ENCODE measurements at regions of chr1 and their contacts with region 1.

Region 1: GRCh38 chr1:12619792-12620487 is 1.9 kb upstream of the DHRS3 start:
- DNase-seq: peak; percentile 56 to 88 (median 74)
- ATAC-seq: peak; percentile 43
- H3K4me3 ChIP-seq: peak overlapping the region; percentile 79
- H3K4me3 Mint-ChIP-seq: peak overlapping the region; percentile 99
- H3K27ac ChIP-seq: no peak overlapping the region
- H3K27ac Mint-ChIP-seq: peak overlapping the region; percentile 88
- H3K4me1 ChIP-seq: peaks cover 54% of the 10 kb centered on the region
- H3K4me1 Mint-ChIP-seq: peaks cover 43% of the 10 kb centered on the region
- H3K27me3 ChIP-seq: no peaks in the 10 kb centered on the region
- H3K27me3 Mint-ChIP-seq: no peaks in the 10 kb centered on the region
- CTCF ChIP-seq: peak; percentile 98

Region 2: DNA sequence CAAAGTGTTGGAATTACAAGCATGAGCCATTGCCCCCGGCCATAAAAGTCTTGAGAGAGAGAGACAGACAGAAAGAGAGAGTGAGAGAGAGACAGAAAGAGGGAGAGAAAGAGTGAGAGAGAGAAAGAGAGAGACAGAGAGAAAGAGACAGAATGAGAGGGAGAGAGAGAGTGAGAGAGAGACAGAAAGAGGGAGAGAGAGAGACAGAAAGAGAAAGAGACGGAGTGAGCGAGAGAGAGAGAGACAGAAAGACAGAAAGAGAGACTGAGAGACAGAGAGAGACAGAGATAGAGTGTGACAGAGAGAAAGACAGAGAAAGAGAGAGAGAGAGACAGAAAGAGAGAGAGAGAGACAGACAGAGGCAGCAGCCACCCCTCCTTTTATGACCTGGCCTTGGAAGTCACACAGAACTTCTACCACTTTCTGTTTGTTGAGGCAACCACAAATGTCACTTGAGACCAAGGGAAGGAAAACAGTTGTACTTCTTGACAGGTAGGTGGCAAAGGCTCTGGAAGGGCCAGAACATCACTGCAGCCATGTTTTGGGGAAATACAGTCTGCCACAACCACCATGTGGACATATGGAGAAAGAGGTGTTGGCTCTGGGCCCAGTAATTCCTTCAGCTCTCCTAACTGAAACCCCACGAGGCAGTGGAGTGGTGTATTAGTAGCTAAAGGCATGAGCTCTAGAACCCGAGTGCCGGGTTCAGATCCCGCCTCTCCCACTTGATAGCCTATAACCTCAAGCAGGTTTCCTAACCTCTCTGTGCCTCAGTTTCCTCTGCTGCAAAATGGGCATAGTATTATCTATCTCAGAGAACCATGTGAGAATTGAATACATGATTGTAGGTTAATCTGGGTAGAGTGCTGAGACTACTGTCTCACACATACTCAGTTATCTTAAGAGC is 506.3 kb before region 1 on chr1:
- CTCF ChIA-PET with region 1: no interaction called
- POLR2A ChIA-PET with region 1: no interaction called
- intact Hi-C with region 1: loop called in 1 of 2 experiments (anchors 5 kb)
- DNase-seq: no peak
- ATAC-seq: no peak
- H3K4me3 ChIP-seq: no peak overlapping the region
- H3K4me3 Mint-ChIP-seq: no peak overlapping the region
- H3K27ac ChIP-seq: no peak overlapping the region
- H3K27ac Mint-ChIP-seq: no peak overlapping the region
- H3K4me1 ChIP-seq: peaks cover 8% of the 10 kb centered on the region
- H3K4me1 Mint-ChIP-seq: no peaks in the 10 kb centered on the region
- H3K27me3 ChIP-seq: no peaks in the 10 kb centered on the region
- H3K27me3 Mint-ChIP-seq: no peaks in the 10 kb centered on the region
- CTCF ChIP-seq: no peak

Region 3: DNA sequence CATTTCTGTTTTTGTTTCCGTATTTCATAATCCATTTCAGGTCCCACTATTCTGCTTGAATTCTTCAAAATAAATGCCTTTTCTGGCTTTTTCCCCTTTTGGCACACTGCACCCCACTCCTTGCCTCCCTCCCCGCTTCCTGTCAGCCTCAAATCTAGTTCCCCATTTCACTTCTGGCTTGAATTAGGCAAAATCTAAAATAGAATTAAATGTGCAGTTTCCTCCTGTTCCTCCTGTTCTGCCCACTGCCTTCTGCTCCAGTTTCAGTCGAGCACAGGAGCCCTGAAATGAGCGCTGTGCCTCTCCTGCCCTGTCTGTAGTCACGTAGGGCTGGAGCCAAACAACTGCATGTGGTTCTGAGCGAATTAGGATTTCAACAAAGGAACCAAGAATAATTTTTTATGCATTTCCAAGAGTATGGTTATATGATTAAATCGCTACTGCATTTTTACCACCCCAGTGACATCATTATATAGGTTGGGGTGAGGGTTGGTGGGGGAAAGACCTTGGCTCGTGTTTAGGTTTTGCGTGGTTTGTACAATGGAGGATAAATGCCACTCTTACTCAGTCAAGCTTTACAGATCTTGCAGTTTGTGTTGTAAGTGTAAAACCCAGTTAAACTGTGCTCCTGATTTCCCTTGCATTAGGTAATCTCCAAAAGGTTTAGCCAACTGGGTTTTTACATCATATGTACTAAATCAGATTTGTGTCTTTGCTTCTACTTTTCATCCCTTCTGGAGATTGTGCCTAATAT is 275.2 kb before region 1 on chr1:
- CTCF ChIA-PET with region 1: interaction called, 5 read pairs
- POLR2A ChIA-PET with region 1: interaction called, 11 read pairs
- intact Hi-C with region 1: loop called in 1 of 2 experiments (anchors 10 kb)
- DNase-seq: peak in 4 of 14 experiments; percentile 9 to 55 (median 18)
- ATAC-seq: peak; percentile 73
- H3K4me3 ChIP-seq: peak overlapping the region; percentile 21
- H3K4me3 Mint-ChIP-seq: peak overlapping the region; percentile 85
- H3K27ac ChIP-seq: peak overlapping the region; percentile 37 to 48
- H3K27ac Mint-ChIP-seq: peak overlapping the region; percentile 95
- H3K4me1 ChIP-seq: peaks cover 32% of the 10 kb centered on the region
- H3K4me1 Mint-ChIP-seq: peaks cover 63% of the 10 kb centered on the region
- H3K27me3 ChIP-seq: no peaks in the 10 kb centered on the region
- H3K27me3 Mint-ChIP-seq: no peaks in the 10 kb centered on the region
- CTCF ChIP-seq: no peak

Region 4: DNA sequence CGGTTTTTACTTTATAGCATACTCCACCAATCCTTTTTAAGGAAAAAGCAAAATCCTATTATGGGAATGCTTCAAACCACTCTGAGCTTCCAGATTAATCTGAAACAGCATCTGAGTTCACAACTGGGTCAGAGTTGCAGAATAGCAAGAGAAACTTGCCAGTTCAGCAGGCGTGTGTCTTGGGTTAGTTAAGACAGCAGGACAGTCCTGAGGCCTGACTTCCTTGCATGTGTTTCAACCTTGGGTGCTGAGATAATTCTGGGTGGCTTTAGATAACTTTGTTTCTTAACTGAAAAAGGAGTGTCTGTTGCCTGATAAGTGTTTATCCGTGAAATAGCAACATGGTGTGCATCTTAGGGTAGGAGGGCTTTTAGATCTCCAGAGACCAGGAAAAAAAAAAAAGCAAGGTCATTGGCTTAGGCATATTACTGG is 171.2 kb before region 1 on chr1:
- CTCF ChIA-PET with region 1: interaction called, 3 read pairs
- POLR2A ChIA-PET with region 1: interaction called, 3 read pairs
- intact Hi-C with region 1: loop called in 1 of 2 experiments (anchors 2 kb)
- DNase-seq: peak in 1 of 14 experiments; percentile 13
- ATAC-seq: no peak
- H3K4me3 ChIP-seq: peak overlapping the region; percentile 19
- H3K4me3 Mint-ChIP-seq: no peak overlapping the region
- H3K27ac ChIP-seq: peak overlapping the region; percentile 33 to 64
- H3K27ac Mint-ChIP-seq: peak overlapping the region; percentile 85
- H3K4me1 ChIP-seq: peaks cover 59% of the 10 kb centered on the region
- H3K4me1 Mint-ChIP-seq: peaks cover 89% of the 10 kb centered on the region
- H3K27me3 ChIP-seq: no peaks in the 10 kb centered on the region
- H3K27me3 Mint-ChIP-seq: no peaks in the 10 kb centered on the region
- CTCF ChIP-seq: no peak

Region 5: DNA sequence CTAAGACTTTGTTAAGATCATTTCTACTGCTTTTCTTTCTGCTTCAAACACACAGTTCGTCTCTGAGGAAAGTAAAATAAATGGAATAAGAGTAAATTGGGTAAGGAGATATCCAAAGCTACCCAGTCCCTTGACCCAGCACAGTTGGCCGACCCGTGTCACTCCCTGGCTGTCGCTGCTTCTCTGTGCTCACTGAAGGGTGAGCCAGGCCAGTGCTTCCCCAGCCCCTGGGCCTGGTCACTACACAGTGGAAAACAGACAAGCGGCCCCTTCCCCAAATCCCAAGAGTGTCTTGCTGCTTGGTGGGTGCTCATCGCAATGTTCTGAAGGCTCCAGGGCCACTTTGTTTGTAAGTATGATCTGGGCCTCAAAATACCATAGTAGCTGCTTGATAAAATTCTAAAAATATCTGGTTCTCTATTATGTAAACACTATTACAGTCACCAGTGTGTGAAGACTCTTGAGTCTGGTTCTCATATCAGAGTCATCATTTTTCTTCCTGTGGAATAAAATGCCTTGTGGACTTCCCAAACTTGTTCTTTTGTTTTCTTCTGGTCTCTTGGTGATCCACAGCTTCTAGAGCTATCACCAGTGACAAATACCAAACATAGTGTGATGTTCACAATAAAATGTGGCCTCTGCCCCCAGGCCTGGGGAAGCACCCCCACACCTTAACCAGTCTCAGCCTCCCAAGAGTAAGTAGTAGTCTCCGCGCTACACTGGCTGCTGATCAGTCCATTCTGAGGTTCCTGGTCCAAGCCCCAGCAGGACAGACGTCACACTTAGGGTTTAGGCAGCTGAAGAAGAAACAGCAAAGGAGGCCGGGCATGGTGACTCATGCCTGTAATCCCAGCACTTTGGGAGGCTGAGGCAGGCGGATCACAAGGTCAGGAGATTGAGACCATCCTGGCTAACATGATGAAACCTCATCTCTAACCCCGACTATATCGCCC is 108.1 kb before region 1 on chr1:
- CTCF ChIA-PET with region 1: interaction called, 26 read pairs
- POLR2A ChIA-PET with region 1: interaction called, 54 read pairs
- intact Hi-C with region 1: loop called (anchors 5 kb)
- DNase-seq: no peak
- ATAC-seq: no peak
- H3K4me3 ChIP-seq: peak overlapping the region; percentile 46
- H3K4me3 Mint-ChIP-seq: peak overlapping the region; percentile 76
- H3K27ac ChIP-seq: peak overlapping the region; percentile 53 to 89
- H3K27ac Mint-ChIP-seq: peak overlapping the region; percentile 96
- H3K4me1 ChIP-seq: peaks cover 44% of the 10 kb centered on the region
- H3K4me1 Mint-ChIP-seq: peaks cover 61% of the 10 kb centered on the region
- H3K27me3 ChIP-seq: no peaks in the 10 kb centered on the region
- H3K27me3 Mint-ChIP-seq: no peaks in the 10 kb centered on the region
- CTCF ChIP-seq: no peak

Region 6: GRCh38 chr1:12658531-12659453 is 38.9 kb after region 1 on chr1:
- CTCF ChIA-PET with region 1: interaction called, 12 read pairs
- POLR2A ChIA-PET with region 1: no interaction called
- intact Hi-C with region 1: loop called in 1 of 2 experiments (anchors 2 kb)
- DNase-seq: peak; percentile 51 to 85 (median 60)
- ATAC-seq: peak; percentile 68
- H3K4me3 ChIP-seq: no peak overlapping the region
- H3K4me3 Mint-ChIP-seq: no peak overlapping the region
- H3K27ac ChIP-seq: no peak overlapping the region
- H3K27ac Mint-ChIP-seq: no peak overlapping the region
- H3K4me1 ChIP-seq: peaks cover 3% of the 10 kb centered on the region
- H3K4me1 Mint-ChIP-seq: peaks cover 3% of the 10 kb centered on the region
- H3K27me3 ChIP-seq: no peaks in the 10 kb centered on the region
- H3K27me3 Mint-ChIP-seq: no peaks in the 10 kb centered on the region
- CTCF ChIP-seq: peak; percentile 92

Measured in CD4-positive, alpha-beta T cell (primary cell).